Activated B cell treated with CpG ODN at 0.5 μM for 24 hours (primary cell): ENCODE measurements at regions of chr9 and their contacts with region 1.

Region 1: GRCh38 chr9:130243015-130243734 is 22.4 kb upstream of the HMCN2 start:
- DNase-seq: peak; percentile 72
- ATAC-seq: peak; percentile 40
- H3K4me3 Mint-ChIP-seq: peak overlapping the region; percentile 59
- H3K27ac Mint-ChIP-seq: peak overlapping the region; percentile 50
- H3K4me1 Mint-ChIP-seq: peaks cover 32% of the 10 kb centered on the region
- H3K27me3 Mint-ChIP-seq: peaks cover 3% of the 10 kb centered on the region
- CTCF ChIP-seq: peak; percentile 33

Region 2: DNA sequence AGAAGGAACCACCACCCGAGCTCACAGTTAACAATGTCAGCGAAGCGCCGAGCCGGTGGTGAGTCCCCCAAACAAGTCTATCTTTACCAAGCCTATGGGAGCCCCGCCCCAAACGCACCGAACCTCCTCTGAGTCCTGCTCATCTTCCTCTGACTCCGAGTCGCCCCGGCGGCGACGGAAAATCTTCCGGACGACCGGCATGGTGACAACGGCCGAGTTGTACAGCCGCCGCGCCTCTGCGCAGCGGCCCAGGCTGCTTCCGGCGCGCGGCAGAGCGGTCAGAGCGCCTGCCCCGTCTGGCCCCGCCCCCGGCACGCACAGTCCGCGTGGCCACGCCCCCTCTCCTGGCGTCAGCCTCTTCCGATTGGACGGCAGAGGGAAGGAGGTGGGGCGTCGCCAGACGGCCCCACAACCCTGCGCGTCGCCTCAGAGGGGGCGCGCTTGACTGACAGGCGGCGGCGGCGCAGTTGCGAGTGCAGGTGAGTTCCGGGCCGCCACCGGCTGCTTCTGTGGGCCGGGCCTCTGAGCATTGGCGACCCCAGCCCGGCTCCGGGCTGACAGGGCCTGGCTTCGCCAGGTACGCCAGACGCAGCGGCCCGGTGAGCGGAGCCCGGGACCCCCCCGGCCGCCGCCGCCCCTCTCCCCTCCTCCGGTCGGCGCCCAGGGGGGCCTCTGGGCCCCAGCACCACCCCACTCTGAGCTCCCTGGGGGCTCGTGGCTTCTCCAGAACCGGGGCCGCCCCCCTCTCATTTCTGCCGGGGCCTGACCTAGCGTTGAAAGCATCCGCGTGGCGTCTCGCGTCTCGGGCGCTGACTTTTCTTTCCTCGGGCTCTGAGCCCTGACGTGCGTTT is 407.9 kb before region 1 on chr9 and contains the starts of genes C9orf78 and USP20:
- CTCF ChIA-PET with region 1: no interaction called
- POLR2A ChIA-PET with region 1: interaction called, 5 read pairs
- intact Hi-C with region 1: loop called (anchors 1 kb)
- DNase-seq: peak; percentile 97
- ATAC-seq: peak; percentile 96
- H3K4me3 Mint-ChIP-seq: peak within 1 kb of the TSS; percentile 99
- H3K27ac Mint-ChIP-seq: peak within 1 kb of the TSS; percentile 98
- H3K4me1 Mint-ChIP-seq: peaks cover 46% of the 10 kb centered on the region
- H3K27me3 Mint-ChIP-seq: no peaks in the 10 kb centered on the region
- CTCF ChIP-seq: no peak
- total RNA-seq, gene C9orf78: 34.1 and 42.7 TPM in 2 replicates
- total RNA-seq, gene USP20: 28.1 and 31.6 TPM in 2 replicates

Region 3: DNA sequence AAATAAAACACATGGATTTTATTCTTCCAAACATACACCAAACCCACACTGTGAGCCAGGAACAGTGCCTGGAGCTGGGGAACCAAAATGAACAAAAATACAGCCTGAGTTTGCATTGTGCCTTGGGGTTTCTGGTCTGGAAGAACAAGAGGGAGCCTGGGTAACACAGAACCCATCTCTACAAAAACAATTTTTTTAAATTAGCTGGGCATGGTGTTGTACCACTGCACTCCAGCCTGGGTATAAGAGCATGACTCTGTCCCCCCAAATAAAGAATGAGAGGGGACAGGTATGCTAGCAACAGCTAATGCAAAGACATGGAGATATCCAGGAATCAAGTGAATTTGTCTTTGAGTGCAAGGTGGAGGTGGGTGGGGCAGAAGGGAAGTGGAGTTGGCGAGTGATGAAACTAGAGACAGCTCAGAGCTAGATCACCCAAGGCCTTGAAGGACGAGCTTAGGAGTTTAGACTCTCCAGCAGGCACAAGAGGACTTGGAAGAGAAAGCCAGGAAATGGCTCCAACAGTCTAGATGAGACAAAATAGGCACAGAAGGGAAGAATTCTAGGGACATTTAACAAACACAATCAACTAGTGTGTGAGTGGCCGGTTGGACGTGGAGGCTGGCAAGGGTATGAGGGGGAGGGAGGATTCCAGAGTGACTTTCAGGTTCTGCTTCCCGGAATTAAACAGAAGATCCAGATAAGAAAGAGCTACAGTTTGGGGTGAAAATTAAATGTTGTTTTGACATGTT is 247.6 kb before region 1 on chr9:
- CTCF ChIA-PET with region 1: no interaction called
- POLR2A ChIA-PET with region 1: interaction called, 14 read pairs
- intact Hi-C with region 1: no loop called
- DNase-seq: no peak
- ATAC-seq: no peak
- H3K4me3 Mint-ChIP-seq: peak overlapping the region; percentile 61
- H3K27ac Mint-ChIP-seq: peak overlapping the region; percentile 93
- H3K4me1 Mint-ChIP-seq: peaks cover 88% of the 10 kb centered on the region
- H3K27me3 Mint-ChIP-seq: no peaks in the 10 kb centered on the region
- CTCF ChIP-seq: no peak

Region 4: DNA sequence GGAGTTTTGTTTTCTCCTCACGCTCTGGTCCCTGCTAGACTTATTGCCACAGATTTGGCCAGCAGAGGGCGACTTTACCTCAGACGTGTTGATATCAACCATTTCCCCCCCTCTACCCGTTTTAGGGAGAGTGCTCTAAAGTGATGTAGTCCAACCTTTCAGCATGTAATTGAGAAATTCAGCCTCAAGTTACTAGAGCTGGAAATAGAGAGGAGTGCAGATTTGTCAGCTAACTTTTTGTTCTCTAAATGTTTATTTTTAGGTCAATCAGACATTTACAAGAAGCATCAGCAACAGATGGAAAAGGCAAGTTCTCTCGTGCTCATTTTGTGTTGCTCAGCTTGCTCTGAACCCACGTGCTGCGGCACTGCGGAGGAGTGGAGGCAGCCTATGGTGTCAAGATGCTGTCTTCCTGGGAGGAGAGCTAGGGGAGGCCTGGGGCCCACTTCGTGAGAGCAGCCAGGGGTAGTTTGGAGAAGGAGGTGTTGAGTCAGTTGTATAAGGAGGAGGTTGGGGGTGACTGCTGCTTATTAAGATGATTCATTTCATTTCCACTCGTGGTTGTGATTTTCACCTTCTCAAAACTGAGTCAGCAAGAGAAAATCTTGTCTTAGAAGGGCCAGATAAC is 135.8 kb before region 1 on chr9:
- CTCF ChIA-PET with region 1: interaction called, 108 read pairs
- POLR2A ChIA-PET with region 1: interaction called, 8 read pairs
- intact Hi-C with region 1: no loop called
- DNase-seq: peak; percentile 58
- ATAC-seq: peak; percentile 90
- H3K4me3 Mint-ChIP-seq: no peak overlapping the region
- H3K27ac Mint-ChIP-seq: peak overlapping the region; percentile 41
- H3K4me1 Mint-ChIP-seq: peaks cover 10% of the 10 kb centered on the region
- H3K27me3 Mint-ChIP-seq: no peaks in the 10 kb centered on the region
- CTCF ChIP-seq: peak; percentile 34

Region 5: DNA sequence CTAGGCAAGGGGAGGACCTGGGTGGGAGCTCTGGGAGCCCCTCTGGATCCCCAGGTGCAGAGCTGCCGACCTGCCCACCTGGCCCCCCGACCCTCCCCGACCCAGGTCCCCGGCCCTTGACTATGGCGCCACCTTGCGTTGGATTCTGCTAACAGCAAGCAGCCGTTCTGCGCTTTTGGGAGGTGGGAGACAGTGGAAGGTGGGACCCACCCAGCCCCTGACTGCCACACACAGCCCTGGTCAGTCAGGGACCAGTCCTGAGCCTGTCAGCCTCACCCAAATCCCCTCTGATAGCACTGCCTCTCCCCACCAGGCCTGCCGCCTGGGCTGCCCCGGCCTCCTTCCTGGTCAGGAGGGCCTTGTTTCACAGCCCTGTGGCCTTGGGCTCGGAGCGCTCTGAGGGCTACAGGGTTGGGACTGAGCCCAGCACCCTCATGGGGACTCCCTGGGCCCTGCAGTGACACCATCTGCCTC is 100.3 kb after region 1 on chr9:
- CTCF ChIA-PET with region 1: no interaction called
- POLR2A ChIA-PET with region 1: no interaction called
- intact Hi-C with region 1: loop called (anchors 5 kb)
- DNase-seq: no peak
- ATAC-seq: peak; percentile 18
- H3K4me3 Mint-ChIP-seq: no peak overlapping the region
- H3K27ac Mint-ChIP-seq: no peak overlapping the region
- H3K4me1 Mint-ChIP-seq: no peaks in the 10 kb centered on the region
- H3K27me3 Mint-ChIP-seq: no peaks in the 10 kb centered on the region
- CTCF ChIP-seq: no peak

Region 6: GRCh38 chr9:130417602-130418001 is 174.4 kb after region 1 on chr9:
- CTCF ChIA-PET with region 1: no interaction called
- POLR2A ChIA-PET with region 1: no interaction called
- intact Hi-C with region 1: loop called (anchors 5 kb)
- DNase-seq: no peak
- ATAC-seq: no peak
- H3K4me3 Mint-ChIP-seq: no peak overlapping the region
- H3K27ac Mint-ChIP-seq: no peak overlapping the region
- H3K4me1 Mint-ChIP-seq: no peaks in the 10 kb centered on the region
- H3K27me3 Mint-ChIP-seq: no peaks in the 10 kb centered on the region
- CTCF ChIP-seq: no peak